MCF 10A (cell line): ENCODE measurements at regions of chr12 and their contacts with region 1.

Region 1: GRCh38 chr12:2291182-2291832 is 238.5 kb downstream of the CACNA1C start:
- DNase-seq: peak; percentile 60
- H3K4me3 Mint-ChIP-seq: no peak overlapping the region
- H3K27ac Mint-ChIP-seq: no peak overlapping the region
- H3K4me1 Mint-ChIP-seq: peaks cover 24% of the 10 kb centered on the region
- H3K27me3 Mint-ChIP-seq: no peaks in the 10 kb centered on the region
- CTCF ChIP-seq: peak; percentile 69

Region 2: DNA sequence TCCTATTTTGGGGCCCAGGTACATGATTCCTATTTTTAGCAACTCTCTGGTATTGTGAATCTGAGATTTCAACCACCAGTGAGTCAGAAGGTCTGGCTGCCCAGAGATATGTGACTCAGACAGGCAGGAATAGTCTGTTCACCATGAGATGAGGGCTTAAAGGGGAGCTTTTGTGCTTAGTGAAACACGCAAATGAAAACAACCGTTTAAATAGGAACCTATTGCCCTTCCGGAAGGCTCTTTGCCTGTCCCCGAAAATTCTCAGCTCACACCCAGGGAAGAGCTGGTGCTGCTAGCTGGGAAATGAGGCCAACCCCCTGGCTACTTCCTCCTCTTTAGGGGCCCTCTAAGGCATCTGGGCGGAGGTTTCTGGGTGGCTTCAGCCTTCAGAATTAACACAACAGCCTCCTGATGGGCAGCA is 45.1 kb after region 1 on chr12:
- CTCF ChIA-PET with region 1: no interaction called
- POLR2A ChIA-PET with region 1: no interaction called
- intact Hi-C with region 1: loop called (anchors 5 kb)
- DNase-seq: peak; percentile 92
- H3K4me3 Mint-ChIP-seq: peak overlapping the region; percentile 52
- H3K27ac Mint-ChIP-seq: peak overlapping the region; percentile 91
- H3K4me1 Mint-ChIP-seq: peaks cover 9% of the 10 kb centered on the region
- H3K27me3 Mint-ChIP-seq: no peaks in the 10 kb centered on the region
- CTCF ChIP-seq: no peak

Region 3: GRCh38 chr12:2395354-2395977 is 104.2 kb after region 1 on chr12:
- CTCF ChIA-PET with region 1: interaction called, 5 read pairs
- POLR2A ChIA-PET with region 1: no interaction called
- intact Hi-C with region 1: loop called (anchors 5 kb)
- DNase-seq: peak; percentile 59
- H3K4me3 Mint-ChIP-seq: no peak overlapping the region
- H3K27ac Mint-ChIP-seq: no peak overlapping the region
- H3K4me1 Mint-ChIP-seq: peaks cover 19% of the 10 kb centered on the region
- H3K27me3 Mint-ChIP-seq: peaks cover 11% of the 10 kb centered on the region
- CTCF ChIP-seq: peak; percentile 84

Region 4: GRCh38 chr12:2482938-2483660 is 191.8 kb after region 1 on chr12:
- CTCF ChIA-PET with region 1: no interaction called
- POLR2A ChIA-PET with region 1: no interaction called
- intact Hi-C with region 1: no loop called
- DNase-seq: no peak
- H3K4me3 Mint-ChIP-seq: no peak overlapping the region
- H3K27ac Mint-ChIP-seq: no peak overlapping the region
- H3K4me1 Mint-ChIP-seq: no peaks in the 10 kb centered on the region
- H3K27me3 Mint-ChIP-seq: no peaks in the 10 kb centered on the region
- CTCF ChIP-seq: no peak